Posterior vena cava (tissue), 2 donors: ENCODE measurements at regions of chrX and their contacts with region 1.

Region 1: DNA sequence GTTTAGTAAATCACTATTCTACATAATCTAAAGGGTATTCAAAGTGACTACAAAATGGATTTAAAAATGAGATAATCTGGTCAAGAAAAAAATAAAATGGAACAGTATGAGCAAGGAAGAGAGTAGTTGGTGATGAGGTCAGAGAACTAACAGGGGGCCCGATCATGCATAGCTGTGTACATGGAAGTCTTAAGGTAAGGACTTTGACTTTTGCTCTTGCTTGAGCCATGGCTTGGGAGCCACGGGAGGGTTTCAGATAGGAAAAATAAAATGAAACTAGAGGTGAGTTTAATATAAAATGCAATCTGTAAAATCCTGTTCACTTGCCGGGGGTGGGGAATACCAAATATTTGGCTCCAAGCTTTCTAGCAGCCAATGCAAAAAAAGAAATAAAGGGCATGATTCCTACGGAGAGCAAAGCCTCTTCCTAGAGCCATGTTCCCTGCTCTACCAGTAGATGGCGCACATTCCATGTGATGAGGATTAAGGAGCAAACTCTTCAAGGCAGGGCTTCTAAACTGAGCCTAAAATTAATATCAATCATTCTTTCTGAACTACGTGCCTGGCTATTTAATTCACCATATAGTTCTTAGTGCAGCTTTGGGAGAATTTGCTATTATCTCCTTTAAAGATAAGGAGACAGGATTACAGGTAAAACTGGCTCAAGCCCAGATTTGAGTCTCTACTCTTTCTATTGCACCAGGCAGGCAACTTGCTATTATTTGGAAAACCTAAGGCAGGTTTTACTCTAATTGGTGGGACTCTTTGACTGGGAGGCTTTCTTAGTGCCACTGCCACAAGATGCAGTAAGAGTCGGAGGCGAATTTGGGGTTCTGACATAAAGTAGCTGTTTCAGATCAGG is 6.8 kb upstream of the CLCN5 start:
- DNase-seq: no peak

Region 2: GRCh38 chrX:50204364-50204899 is 288.8 kb after region 1 on chrX and contains the start of gene CCNB3:
- intact Hi-C with region 1: loop called in 1 of 2 experiments (anchors 5 kb)
- DNase-seq: peak; percentile 88
- total RNA-seq, gene CCNB3: 0.76 to 1.4 TPM

Region 3: GRCh38 chrX:50442426-50443116 is 527.0 kb after region 1 on chrX:
- intact Hi-C with region 1: no loop called
- DNase-seq: no peak